ENCODE measurements at regions of chr12 and their contacts with region 1.

Region 1: GRCh38 chr12:113912760-113913329 is 53.3 kb downstream of the RBM19 start:
- DNase-seq: peak in 1 of 2 donors; percentile 67
- H3K4me3 ChIP-seq: no peak overlapping the region
- H3K27ac ChIP-seq: no peak overlapping the region
- H3K4me1 ChIP-seq: no peaks in the 10 kb centered on the region
- H3K27me3 ChIP-seq: no peaks in the 10 kb centered on the region
- CTCF ChIP-seq: peak; percentile 48 to 85 (median 75)

Region 2: GRCh38 chr12:113462117-113462774 is 450.6 kb before region 1 on chr12:
- intact Hi-C with region 1: loop called (anchors 2 kb)
- DNase-seq: peak in 1 of 2 donors; percentile 84
- H3K4me3 ChIP-seq: peak overlapping the region; percentile 47 to 50
- H3K27ac ChIP-seq: no peak overlapping the region
- H3K4me1 ChIP-seq: peaks cover 15 to 21% of the 10 kb centered on the region in 2 donors
- H3K27me3 ChIP-seq: peaks cover 37% of the 10 kb centered on the region
- CTCF ChIP-seq: peak; percentile 54 to 84 (median 77)

Region 3: GRCh38 chr12:113712481-113712880 is 200.4 kb before region 1 on chr12:
- intact Hi-C with region 1: no loop called
- DNase-seq: no peak
- H3K4me3 ChIP-seq: no peak overlapping the region
- H3K27ac ChIP-seq: no peak overlapping the region
- H3K4me1 ChIP-seq: no peaks in the 10 kb centered on the region
- H3K27me3 ChIP-seq: no peaks in the 10 kb centered on the region
- CTCF ChIP-seq: no peak

Region 4: GRCh38 chr12:114096461-114096860 is 183.6 kb after region 1 on chr12:
- intact Hi-C with region 1: no loop called
- DNase-seq: no peak
- H3K4me3 ChIP-seq: no peak overlapping the region
- H3K27ac ChIP-seq: no peak overlapping the region
- H3K4me1 ChIP-seq: no peaks in the 10 kb centered on the region
- H3K27me3 ChIP-seq: no peaks in the 10 kb centered on the region
- CTCF ChIP-seq: no peak

Measured in ascending aorta (tissue), 2 donors.